ENCODE measurements at regions of chr1 and their contacts with region 1.

Region 1: DNA sequence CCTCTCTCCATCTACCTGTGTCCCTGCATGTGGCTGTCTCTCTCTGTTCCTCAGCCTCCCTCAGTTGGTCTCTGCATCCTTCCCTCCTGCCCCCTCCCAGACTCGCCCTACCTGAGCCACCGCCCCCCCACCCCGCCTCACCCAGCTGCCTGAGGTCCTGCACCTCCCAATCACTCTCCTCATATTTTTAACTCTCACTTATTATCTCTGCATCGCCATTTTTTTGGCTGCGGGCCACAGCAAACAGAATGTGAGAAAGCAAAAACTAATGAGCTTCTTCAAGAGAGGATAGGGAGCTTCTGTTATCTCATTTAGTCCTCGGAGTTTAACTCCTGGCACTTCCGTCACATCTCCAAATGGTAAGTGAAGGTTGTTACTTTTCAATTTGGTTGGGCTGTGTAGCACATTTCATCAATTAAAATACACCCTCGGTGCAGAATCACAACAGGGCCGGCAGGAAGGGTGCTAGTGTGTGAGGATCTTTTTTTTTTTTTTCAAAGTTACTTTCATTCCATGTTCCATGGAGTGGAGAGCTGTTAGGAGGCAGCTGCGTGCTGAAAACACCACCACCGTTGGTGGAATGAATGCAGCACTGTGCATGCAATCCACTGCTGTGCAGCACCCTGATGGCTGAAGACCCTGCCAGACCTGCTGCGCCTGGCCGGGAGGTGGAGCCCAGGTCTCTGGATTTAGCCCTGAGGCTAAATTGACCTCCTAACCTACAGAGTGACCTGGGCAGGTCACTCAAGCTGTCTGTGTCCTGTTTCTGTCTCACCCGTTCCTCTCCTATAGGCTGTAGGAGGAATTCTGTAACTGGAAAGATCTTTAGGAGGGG is 157.2 kb upstream of the NFIA start:
- DNase-seq: peak in 1 of 2 experiments; percentile 48
- H3K4me3 ChIP-seq: no peak overlapping the region
- H3K27ac ChIP-seq: no peak overlapping the region
- H3K4me1 ChIP-seq: peaks cover 6% of the 10 kb centered on the region; the same call in 1 of the 2 replicates
- H3K27me3 ChIP-seq: no peaks in the 10 kb centered on the region
- CTCF ChIP-seq: no peak

Region 2: DNA sequence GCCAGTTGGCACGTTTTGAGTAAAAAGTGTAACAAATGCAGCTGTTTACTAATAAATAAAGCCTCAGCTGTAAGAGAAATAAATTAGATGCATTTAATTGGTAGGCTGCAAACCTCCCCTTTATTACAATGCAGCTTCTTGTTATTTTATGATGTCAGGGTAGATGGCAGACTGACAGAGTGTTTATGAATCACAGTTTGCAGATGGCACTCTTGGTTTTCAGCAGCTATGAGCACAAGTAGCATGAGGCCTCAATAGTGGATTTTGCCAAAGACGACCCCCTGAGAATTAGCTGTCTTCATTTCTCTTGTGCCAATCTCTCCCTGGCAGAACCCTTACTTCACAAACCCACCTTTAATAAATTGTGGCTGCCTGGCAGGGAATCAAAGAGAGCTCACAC is 690.4 kb before region 1 on chr1:
- CTCF ChIA-PET with region 1: interaction called, 16 read pairs
- POLR2A ChIA-PET with region 1: no interaction called
- intact Hi-C with region 1: no loop called
- DNase-seq: no peak
- H3K4me3 ChIP-seq: no peak overlapping the region
- H3K27ac ChIP-seq: no peak overlapping the region
- H3K4me1 ChIP-seq: no peaks in the 10 kb centered on the region
- H3K27me3 ChIP-seq: no peaks in the 10 kb centered on the region
- CTCF ChIP-seq: no peak

Region 3: DNA sequence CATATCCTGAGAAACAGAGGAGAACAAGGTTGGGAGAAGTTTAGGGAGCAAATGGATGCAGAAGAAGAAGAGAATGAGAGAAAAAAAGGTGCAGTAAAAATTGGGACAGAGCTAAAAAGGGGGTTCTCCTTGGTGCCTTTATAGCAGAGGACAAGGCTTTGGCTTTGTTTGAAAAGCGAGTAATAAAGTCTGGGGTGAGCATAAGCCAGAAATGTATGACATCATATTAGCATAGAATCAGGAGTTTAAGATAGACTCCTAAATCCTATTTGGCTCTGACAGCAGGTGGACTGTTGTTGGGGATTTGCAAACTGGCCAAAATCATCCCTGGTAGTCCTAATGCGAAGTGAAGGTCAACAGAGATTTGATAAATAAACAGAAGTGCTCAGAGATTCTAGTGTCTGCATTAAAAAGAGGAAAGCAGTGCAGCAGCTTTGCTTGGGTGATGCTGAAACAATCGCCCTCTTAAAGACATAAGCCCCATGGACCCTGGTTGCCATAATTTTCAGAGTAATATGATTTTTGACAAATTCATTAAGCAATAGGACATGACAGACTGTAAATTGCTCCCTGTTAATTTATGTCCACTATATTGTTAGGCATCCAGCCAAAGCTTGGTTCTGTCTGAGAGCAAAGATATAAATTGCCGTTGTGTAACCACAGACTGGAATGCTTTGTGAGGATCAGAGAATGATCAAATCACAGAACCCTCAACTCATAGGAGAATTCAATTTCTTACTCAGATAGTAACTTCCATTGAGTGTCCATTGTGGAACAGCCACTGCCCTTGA is 227.8 kb before region 1 on chr1:
- CTCF ChIA-PET with region 1: no interaction called
- POLR2A ChIA-PET with region 1: no interaction called
- intact Hi-C with region 1: no loop called
- DNase-seq: no peak
- H3K4me3 ChIP-seq: no peak overlapping the region
- H3K27ac ChIP-seq: no peak overlapping the region
- H3K4me1 ChIP-seq: no peaks in the 10 kb centered on the region
- H3K27me3 ChIP-seq: no peaks in the 10 kb centered on the region
- CTCF ChIP-seq: no peak

Region 4: GRCh38 chr1:60865166-60865565 is 60.0 kb before region 1 on chr1:
- CTCF ChIA-PET with region 1: no interaction called
- POLR2A ChIA-PET with region 1: no interaction called
- intact Hi-C with region 1: no loop called
- DNase-seq: no peak
- H3K4me3 ChIP-seq: no peak overlapping the region
- H3K27ac ChIP-seq: no peak overlapping the region
- H3K4me1 ChIP-seq: 0 out of 2 replicates have a peak, but pooled peaks cover 6% of the 10 kb centered on the region
- H3K27me3 ChIP-seq: no peaks in the 10 kb centered on the region
- CTCF ChIP-seq: no peak

Region 5: GRCh38 chr1:60895252-60895651 is 29.9 kb before region 1 on chr1:
- CTCF ChIA-PET with region 1: interaction called, 19 read pairs
- POLR2A ChIA-PET with region 1: no interaction called
- intact Hi-C with region 1: no loop called
- DNase-seq: no peak
- H3K4me3 ChIP-seq: no peak overlapping the region
- H3K27ac ChIP-seq: no peak overlapping the region
- H3K4me1 ChIP-seq: no peaks in the 10 kb centered on the region
- H3K27me3 ChIP-seq: no peaks in the 10 kb centered on the region
- CTCF ChIP-seq: no peak

Region 6: DNA sequence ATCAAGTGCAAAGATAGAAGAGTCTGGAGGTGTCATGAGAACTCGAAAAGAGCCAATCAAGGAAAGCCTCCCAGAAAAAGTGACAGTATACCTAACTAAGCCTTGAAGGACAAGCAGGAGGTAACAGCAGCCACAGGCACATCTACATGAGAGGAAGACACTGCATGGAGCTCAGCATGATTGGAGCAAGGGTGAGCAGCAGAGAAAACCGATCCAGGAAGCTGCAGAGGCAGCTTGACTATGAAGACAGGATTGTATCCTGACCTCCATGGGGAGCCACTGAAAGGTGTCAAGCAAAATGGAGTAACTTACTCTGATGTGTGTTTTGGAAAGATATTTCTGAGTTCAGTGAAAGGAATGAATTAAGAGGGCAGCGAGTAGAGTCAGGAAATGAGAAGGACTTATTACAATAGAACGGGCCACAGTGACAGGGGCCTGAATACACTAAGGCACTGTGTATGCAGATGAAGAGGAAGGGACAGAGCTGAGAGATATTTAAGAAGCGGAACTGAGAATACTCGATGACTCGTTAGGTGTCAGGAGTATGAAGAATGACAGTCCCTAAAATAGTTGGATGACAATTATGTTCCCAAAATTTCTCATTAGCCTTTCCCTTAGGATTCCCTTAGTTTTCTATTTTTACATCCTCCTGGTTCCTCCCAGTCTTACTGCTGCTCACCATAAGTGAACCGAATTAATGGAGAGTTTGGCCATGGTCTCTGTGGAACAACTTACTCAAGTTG is 17.9 kb after region 1 on chr1:
- CTCF ChIA-PET with region 1: no interaction called
- POLR2A ChIA-PET with region 1: no interaction called
- intact Hi-C with region 1: loop called (anchors 1 kb)
- DNase-seq: peak in 1 of 2 experiments; percentile 12
- H3K4me3 ChIP-seq: no peak overlapping the region
- H3K27ac ChIP-seq: peak overlapping the region; percentile 54
- H3K4me1 ChIP-seq: peaks cover 29% of the 10 kb centered on the region
- H3K27me3 ChIP-seq: no peaks in the 10 kb centered on the region
- CTCF ChIP-seq: no peak

Region 7: GRCh38 chr1:61011561-61012263 is 86.5 kb after region 1 on chr1:
- CTCF ChIA-PET with region 1: no interaction called
- POLR2A ChIA-PET with region 1: no interaction called
- intact Hi-C with region 1: no loop called
- DNase-seq: no peak
- H3K4me3 ChIP-seq: no peak overlapping the region
- H3K27ac ChIP-seq: no peak overlapping the region
- H3K4me1 ChIP-seq: no peaks in the 10 kb centered on the region
- H3K27me3 ChIP-seq: no peaks in the 10 kb centered on the region
- CTCF ChIP-seq: no peak

Measured in PC-9 (cell line).